A673 (cell line): ENCODE measurements at regions of chr10 and their contacts with region 1.

Region 1: GRCh38 chr10:25226775-25227682 is 52.2 kb downstream of the GPR158 start:
- DNase-seq: peak; percentile 69
- H3K4me3 ChIP-seq: no peak overlapping the region
- H3K27ac ChIP-seq: no peak overlapping the region
- H3K4me1 ChIP-seq: no peaks in the 10 kb centered on the region
- H3K27me3 ChIP-seq: peaks cover 17% of the 10 kb centered on the region
- CTCF ChIP-seq: peak; percentile 86

Region 2: DNA sequence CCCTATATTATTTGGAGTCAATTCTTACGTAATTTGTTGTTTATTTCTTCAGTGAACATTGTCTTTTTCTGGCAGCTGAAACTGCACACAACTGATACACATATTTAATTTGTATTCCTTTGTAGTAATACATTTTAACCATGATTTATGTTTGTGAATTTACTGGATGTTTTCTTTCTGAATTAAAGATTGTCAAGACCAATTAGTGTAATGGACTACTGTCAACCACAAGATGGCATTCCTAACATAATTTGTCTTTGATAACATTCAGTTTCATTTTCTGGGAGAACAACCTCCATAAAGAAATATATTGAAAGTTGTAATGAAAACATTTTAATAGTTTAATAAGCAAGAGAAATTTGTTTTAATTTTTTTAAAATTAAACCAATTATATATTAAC is 200.6 kb before region 1 on chr10:
- CTCF ChIA-PET with region 1: no interaction called
- POLR2A ChIA-PET with region 1: no interaction called
- intact Hi-C with region 1: loop called (anchors 10 kb)
- DNase-seq: peak; percentile 22
- H3K4me3 ChIP-seq: no peak overlapping the region
- H3K27ac ChIP-seq: no peak overlapping the region
- H3K4me1 ChIP-seq: no peaks in the 10 kb centered on the region
- H3K27me3 ChIP-seq: no peaks in the 10 kb centered on the region
- CTCF ChIP-seq: peak; percentile 47; the same call in 1 of the 2 replicates

Region 3: GRCh38 chr10:25113191-25114035 is 113.6 kb before region 1 on chr10:
- CTCF ChIA-PET with region 1: interaction called, 14 read pairs
- POLR2A ChIA-PET with region 1: no interaction called
- intact Hi-C with region 1: loop called (anchors 1 kb)
- DNase-seq: peak; percentile 82
- H3K4me3 ChIP-seq: no peak overlapping the region
- H3K27ac ChIP-seq: no peak overlapping the region
- H3K4me1 ChIP-seq: no peaks in the 10 kb centered on the region
- H3K27me3 ChIP-seq: no peaks in the 10 kb centered on the region
- CTCF ChIP-seq: peak; percentile 89

Region 4: DNA sequence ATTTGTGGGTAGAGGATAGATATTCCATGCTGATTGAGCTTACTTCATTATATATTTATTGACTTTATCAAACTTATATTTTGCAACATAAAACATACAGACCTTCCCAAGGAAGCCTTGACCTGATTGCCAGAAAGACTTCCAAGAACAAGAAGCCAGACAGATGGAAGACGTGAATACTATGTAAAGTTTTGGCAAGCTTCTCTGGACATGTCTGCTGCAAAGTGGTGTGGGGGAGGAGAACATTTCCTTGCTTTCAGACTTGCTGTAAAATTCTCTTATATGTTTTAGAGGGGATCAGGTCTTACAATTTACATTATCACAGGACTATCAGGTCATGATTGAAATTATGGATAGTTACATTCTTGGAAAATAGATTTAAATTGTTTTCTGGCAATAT is 28.9 kb before region 1 on chr10:
- CTCF ChIA-PET with region 1: no interaction called
- POLR2A ChIA-PET with region 1: no interaction called
- intact Hi-C with region 1: no loop called
- DNase-seq: no peak
- H3K4me3 ChIP-seq: no peak overlapping the region
- H3K27ac ChIP-seq: no peak overlapping the region
- H3K4me1 ChIP-seq: no peaks in the 10 kb centered on the region
- H3K27me3 ChIP-seq: peaks cover 15% of the 10 kb centered on the region
- CTCF ChIP-seq: no peak